Activated CD8-positive, alpha-beta T cell treated with anti-CD3 and anti-CD28 coated beads for 36 hours (primary cell): ENCODE measurements at regions of chr13 and their contacts with region 1.

Region 1: GRCh38 chr13:99033814-99034213 is 56.0 kb upstream of the DOCK9 start:
- DNase-seq: no peak
- ATAC-seq: peak; percentile 71
- H3K4me3 Mint-ChIP-seq: no peak overlapping the region
- H3K27ac Mint-ChIP-seq: no peak overlapping the region
- H3K4me1 Mint-ChIP-seq: peaks cover 43% of the 10 kb centered on the region
- H3K27me3 Mint-ChIP-seq: no peaks in the 10 kb centered on the region
- CTCF ChIP-seq: peak; percentile 46

Region 2: GRCh38 chr13:98741741-98742435 is 291.9 kb before region 1 on chr13:
- CTCF ChIA-PET with region 1: no interaction called
- POLR2A ChIA-PET with region 1: no interaction called
- intact Hi-C with region 1: no loop called
- DNase-seq: no peak
- ATAC-seq: no peak
- H3K4me3 Mint-ChIP-seq: no peak overlapping the region
- H3K27ac Mint-ChIP-seq: no peak overlapping the region
- H3K4me1 Mint-ChIP-seq: no peaks in the 10 kb centered on the region
- H3K27me3 Mint-ChIP-seq: no peaks in the 10 kb centered on the region
- CTCF ChIP-seq: no peak

Region 3: DNA sequence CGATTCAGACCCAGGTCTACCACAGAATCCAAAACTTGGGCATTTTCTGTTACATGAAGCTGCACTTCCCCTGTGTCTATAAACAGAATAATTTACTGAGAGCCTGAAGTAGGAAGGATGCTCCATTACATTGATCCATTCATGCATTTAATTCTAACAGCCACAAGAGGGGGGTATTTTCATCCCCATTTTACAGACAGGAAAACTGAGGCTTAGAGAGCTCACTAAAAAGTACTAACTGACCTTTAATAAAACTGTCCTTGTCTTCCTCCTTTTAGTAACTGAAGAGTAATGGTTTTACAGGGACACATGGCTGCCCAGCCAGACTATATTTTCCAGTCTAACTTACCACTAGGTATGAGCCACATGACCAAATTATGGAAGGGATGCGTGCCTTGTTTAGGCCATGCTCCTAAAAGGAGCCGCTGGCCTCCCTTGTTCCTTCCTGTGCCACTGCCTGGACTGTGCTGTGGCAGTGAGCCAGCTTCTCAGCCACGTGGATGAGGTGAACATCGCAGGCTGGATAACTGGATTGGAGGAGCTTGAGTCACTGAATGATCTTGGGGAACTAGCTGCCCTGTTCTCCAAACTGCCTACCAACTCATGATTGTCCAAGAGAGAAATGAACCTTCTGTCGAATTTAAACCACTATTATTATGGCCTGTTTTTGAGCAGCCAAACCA is 164.3 kb before region 1 on chr13:
- CTCF ChIA-PET with region 1: interaction called, 11 read pairs
- POLR2A ChIA-PET with region 1: interaction called, 3 read pairs
- intact Hi-C with region 1: loop called (anchors 5 kb)
- DNase-seq: no peak
- ATAC-seq: no peak
- H3K4me3 Mint-ChIP-seq: no peak overlapping the region
- H3K27ac Mint-ChIP-seq: no peak overlapping the region
- H3K4me1 Mint-ChIP-seq: peaks cover 14% of the 10 kb centered on the region
- H3K27me3 Mint-ChIP-seq: no peaks in the 10 kb centered on the region
- CTCF ChIP-seq: peak; percentile 59

Region 4: DNA sequence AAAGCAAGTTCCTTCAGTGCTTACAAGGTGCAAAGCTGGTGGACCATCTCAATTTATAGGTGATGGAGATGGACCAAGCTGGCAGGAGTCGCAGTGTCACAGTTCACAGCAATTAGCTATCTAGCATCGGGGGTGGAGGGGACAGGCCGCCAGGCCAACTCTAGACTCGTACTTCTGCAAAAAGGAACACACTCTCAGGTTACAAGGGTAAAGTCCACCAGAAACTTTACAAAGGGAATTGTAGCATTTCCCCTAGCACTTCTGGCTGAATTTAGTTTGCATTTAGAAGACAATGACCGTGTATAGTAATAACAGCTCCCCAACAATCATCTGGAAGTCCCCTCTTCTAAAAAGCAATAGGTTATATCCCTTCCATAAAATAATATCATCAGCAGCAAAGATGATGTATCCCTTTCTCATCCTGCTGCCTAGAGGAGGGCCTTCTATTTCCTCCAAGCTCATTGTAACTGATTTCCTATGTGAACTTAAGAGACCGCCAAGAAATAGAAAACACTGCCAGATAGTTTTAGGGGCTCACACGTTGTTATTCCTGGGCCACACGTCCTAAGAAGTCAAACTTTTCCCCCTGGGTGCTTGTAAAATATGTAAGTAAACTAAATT is 47.5 kb before region 1 on chr13:
- CTCF ChIA-PET with region 1: interaction called, 8 read pairs
- POLR2A ChIA-PET with region 1: interaction called, 3 read pairs
- intact Hi-C with region 1: loop called (anchors 5 kb)
- DNase-seq: no peak
- ATAC-seq: no peak
- H3K4me3 Mint-ChIP-seq: no peak overlapping the region
- H3K27ac Mint-ChIP-seq: no peak overlapping the region
- H3K4me1 Mint-ChIP-seq: peaks cover 82% of the 10 kb centered on the region
- H3K27me3 Mint-ChIP-seq: no peaks in the 10 kb centered on the region
- CTCF ChIP-seq: no peak

Region 5: GRCh38 chr13:99045396-99045795 is 11.6 kb after region 1 on chr13:
- CTCF ChIA-PET with region 1: interaction called, 26 read pairs
- POLR2A ChIA-PET with region 1: interaction called, 3 read pairs
- intact Hi-C with region 1: no loop called
- DNase-seq: no peak
- ATAC-seq: no peak
- H3K4me3 Mint-ChIP-seq: peak overlapping the region; percentile 18
- H3K27ac Mint-ChIP-seq: peak overlapping the region; percentile 86
- H3K4me1 Mint-ChIP-seq: peaks cover 86% of the 10 kb centered on the region
- H3K27me3 Mint-ChIP-seq: no peaks in the 10 kb centered on the region
- CTCF ChIP-seq: no peak